ENCODE measurements at regions of chr12 and their contacts with region 1.

Region 1: GRCh38 chr12:120504587-120504986 is 8.7 kb downstream of the DYNLL1 start:
- DNase-seq: no peak
- ATAC-seq: no peak
- H3K4me3 ChIP-seq: no peak overlapping the region
- H3K27ac ChIP-seq: no peak overlapping the region
- H3K4me1 ChIP-seq: no peaks in the 10 kb centered on the region
- H3K27me3 ChIP-seq: no peaks in the 10 kb centered on the region
- CTCF ChIP-seq: no peak
- EP300 ChIP-seq: no peak
- POLR2A ChIP-seq: no peak
- RAD21 ChIP-seq: no peak

Region 2: GRCh38 chr12:120489018-120489417 is 15.6 kb before region 1 on chr12:
- CTCF ChIA-PET with region 1: no interaction called
- POLR2A ChIA-PET with region 1: interaction called, 14 read pairs
- in situ Hi-C with region 1: no loop called
- intact Hi-C with region 1: no loop called
- DNase-seq: peak in 1 of 4 experiments; percentile 19
- ATAC-seq: peak; percentile 40; the same call in 2 of the 3 replicates
- H3K4me3 ChIP-seq: no peak overlapping the region
- H3K27ac ChIP-seq: peak overlapping the region; percentile 15; the same call in 1 of the 3 replicates
- H3K4me1 ChIP-seq: peaks cover 12 to 23% of the 10 kb centered on the region in 2 experiments; a peak in 4 of 5 replicates
- H3K27me3 ChIP-seq: no peaks in the 10 kb centered on the region; a peak in 1 of 5 replicates
- CTCF ChIP-seq: no peak
- EP300 ChIP-seq: no peak
- POLR2A ChIP-seq: no peak
- RAD21 ChIP-seq: no peak